ENCODE measurements at regions of chr11 and their contacts with region 1.

Region 1: GRCh38 chr11:93895106-93895862 is 44.9 kb upstream of the VSTM5 start:
- DNase-seq: peak; percentile 59
- ATAC-seq: peak; percentile 98
- H3K4me3 ChIP-seq: no peak overlapping the region
- H3K27ac ChIP-seq: no peak overlapping the region
- H3K4me1 ChIP-seq: no peaks in the 10 kb centered on the region
- H3K27me3 ChIP-seq: 0 out of 2 replicates have a peak, but pooled peaks cover 6% of the 10 kb centered on the region
- CTCF ChIP-seq: peak; percentile 59 to 79 (median 65); a peak in 5 of 6 replicates
- POLR2A ChIP-seq: no peak
- RAD21 ChIP-seq: peak; percentile 90

Region 2: DNA sequence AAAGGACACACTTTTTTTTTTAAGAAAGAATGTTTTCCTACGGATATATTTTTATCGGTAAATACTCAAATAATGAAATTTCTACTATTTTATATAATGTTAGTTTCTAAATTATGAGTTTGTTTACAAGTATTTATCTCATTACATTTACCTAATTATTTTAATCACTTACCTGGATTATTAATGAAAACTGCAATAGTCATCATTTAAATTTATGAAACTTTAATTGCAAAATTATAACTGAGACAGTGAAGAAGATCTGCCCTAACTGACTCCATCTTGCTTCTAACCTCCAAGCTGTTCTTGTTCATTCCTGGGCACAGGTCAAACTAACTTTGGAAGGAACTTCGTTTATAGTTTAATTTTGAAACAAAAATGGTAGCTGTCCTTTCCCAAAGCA is 19.6 kb before region 1 on chr11:
- CTCF ChIA-PET with region 1: interaction called, 12 read pairs
- POLR2A ChIA-PET with region 1: no interaction called
- RAD21 ChIA-PET with region 1: no interaction called
- intact Hi-C with region 1: no loop called
- DNase-seq: no peak
- ATAC-seq: no peak
- H3K4me3 ChIP-seq: no peak overlapping the region
- H3K27ac ChIP-seq: no peak overlapping the region
- H3K4me1 ChIP-seq: no peaks in the 10 kb centered on the region
- H3K27me3 ChIP-seq: no peaks in the 10 kb centered on the region
- CTCF ChIP-seq: no peak
- POLR2A ChIP-seq: no peak
- RAD21 ChIP-seq: no peak

Region 3: DNA sequence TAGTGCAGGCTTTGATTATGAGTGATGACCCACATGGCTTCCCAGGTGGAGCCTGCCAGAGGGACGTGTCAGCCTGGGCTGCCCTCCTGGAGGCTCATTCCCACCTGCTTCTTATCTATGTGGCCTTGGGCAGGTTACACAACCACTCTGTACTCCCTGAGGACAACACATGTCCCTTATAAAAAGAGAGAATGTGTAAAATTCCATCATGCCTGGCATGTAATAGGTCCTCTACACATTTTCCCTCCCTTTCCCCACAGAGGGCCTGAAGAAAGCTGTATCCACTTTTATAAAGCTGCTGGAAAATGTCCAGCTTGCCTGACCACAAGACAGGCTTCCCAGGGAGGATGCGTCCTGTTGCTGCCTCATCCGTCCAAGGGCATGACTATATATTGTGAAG is 10.1 kb after region 1 on chr11:
- CTCF ChIA-PET with region 1: interaction called, 10 read pairs
- POLR2A ChIA-PET with region 1: no interaction called
- RAD21 ChIA-PET with region 1: no interaction called
- intact Hi-C with region 1: no loop called
- DNase-seq: no peak
- ATAC-seq: no peak
- H3K4me3 ChIP-seq: no peak overlapping the region
- H3K27ac ChIP-seq: no peak overlapping the region
- H3K4me1 ChIP-seq: peaks cover 0 to 10% of the 10 kb centered on the region in 2 experiments; a peak in 2 of 4 replicates
- H3K27me3 ChIP-seq: peaks cover 4% of the 10 kb centered on the region; the same call in 1 of the 2 replicates
- CTCF ChIP-seq: no peak
- POLR2A ChIP-seq: no peak
- RAD21 ChIP-seq: no peak

Region 4: DNA sequence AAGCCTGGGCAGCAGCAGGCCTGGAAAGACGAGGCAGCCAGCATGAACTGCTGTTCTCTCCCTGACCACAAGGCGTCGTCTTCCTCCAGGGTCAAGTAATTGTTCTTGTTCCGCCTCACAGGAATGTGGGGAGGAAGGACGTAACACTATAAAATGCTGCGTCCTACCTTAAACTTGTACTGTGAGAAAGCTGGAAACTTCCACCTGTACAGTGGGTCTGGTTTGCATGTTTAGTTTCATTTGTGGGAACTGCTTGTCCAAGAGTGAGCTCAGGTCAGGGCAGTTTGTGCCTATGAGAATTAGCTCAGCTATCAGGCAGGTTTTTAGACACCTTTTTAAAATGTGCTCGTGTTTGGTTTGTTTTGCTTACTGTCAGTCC is 288.6 kb after region 1 on chr11:
- CTCF ChIA-PET with region 1: interaction called, 17 read pairs
- POLR2A ChIA-PET with region 1: no interaction called
- RAD21 ChIA-PET with region 1: interaction called in 1 of 2 experiments, 4 read pairs
- intact Hi-C with region 1: loop called (anchors 5 kb)
- DNase-seq: peak; percentile 49
- ATAC-seq: peak; percentile 94
- H3K4me3 ChIP-seq: no peak overlapping the region
- H3K27ac ChIP-seq: no peak overlapping the region
- H3K4me1 ChIP-seq: peaks cover 0 to 5% of the 10 kb centered on the region in 2 experiments; a peak in 1 of 4 replicates
- H3K27me3 ChIP-seq: no peaks in the 10 kb centered on the region
- CTCF ChIP-seq: peak; percentile 65 to 94 (median 90)
- POLR2A ChIP-seq: no peak
- RAD21 ChIP-seq: peak; percentile 82

Region 5: DNA sequence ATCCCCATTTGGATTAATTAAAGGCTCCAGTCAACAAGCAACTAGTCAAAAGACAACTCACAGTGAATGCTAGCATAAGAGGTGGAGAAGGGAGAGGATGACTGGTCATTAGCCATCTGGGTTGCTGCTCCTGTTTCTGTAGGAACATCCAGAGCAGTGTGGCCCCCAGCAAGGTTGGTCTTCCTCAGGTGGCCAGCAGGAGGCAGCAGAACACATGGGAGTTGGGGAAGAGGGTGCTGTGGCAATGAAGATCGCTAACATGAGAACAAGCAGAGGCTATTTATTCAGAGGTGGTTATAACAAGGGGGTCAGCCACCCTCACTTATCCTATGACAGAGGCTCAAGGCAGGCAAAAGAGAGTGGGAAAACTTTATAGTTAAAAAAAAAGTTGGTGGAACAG is 430.4 kb after region 1 on chr11:
- CTCF ChIA-PET with region 1: interaction called, 4 read pairs
- POLR2A ChIA-PET with region 1: no interaction called
- RAD21 ChIA-PET with region 1: no interaction called
- intact Hi-C with region 1: loop called (anchors 10 kb)
- DNase-seq: peak; percentile 41
- ATAC-seq: peak; percentile 94
- H3K4me3 ChIP-seq: no peak overlapping the region
- H3K27ac ChIP-seq: no peak overlapping the region
- H3K4me1 ChIP-seq: no peaks in the 10 kb centered on the region; a peak in 1 of 4 replicates
- H3K27me3 ChIP-seq: no peaks in the 10 kb centered on the region
- CTCF ChIP-seq: peak; percentile 45 to 83 (median 72); a peak in 5 of 6 replicates
- POLR2A ChIP-seq: no peak
- RAD21 ChIP-seq: peak; percentile 75

Region 6: DNA sequence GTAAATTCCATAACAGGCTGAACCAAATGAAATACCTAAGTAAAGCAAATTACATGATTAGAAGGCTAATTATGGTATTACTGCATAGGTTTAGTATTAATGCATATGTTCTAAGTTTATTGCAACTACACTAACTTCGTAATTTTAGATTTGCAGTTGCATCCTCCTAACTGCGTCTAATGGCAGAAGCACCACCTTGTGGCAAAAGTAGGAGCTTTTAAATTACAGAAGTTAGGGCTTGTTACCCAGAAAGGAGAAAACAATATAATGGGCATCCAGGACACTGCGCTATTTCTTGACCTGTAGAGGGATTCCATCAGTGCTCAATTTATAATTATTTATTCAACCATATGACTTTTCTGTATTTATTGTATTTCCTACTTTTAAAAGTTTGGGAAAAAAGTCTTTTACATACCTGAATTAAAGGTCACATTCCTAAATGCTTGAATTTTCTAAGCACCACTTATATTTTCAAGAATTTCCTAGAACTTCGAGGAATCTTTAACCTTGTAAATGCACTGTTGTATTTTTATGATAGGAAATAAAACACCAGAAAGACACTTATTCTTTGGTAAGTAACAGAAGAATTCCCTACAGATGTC is 522.2 kb after region 1 on chr11:
- CTCF ChIA-PET with region 1: interaction called, 19 read pairs
- POLR2A ChIA-PET with region 1: no interaction called
- RAD21 ChIA-PET with region 1: no interaction called
- intact Hi-C with region 1: loop called (anchors 2 kb)
- DNase-seq: peak; percentile 2
- ATAC-seq: peak; percentile 67
- H3K4me3 ChIP-seq: no peak overlapping the region
- H3K27ac ChIP-seq: no peak overlapping the region
- H3K4me1 ChIP-seq: no peaks in the 10 kb centered on the region
- H3K27me3 ChIP-seq: no peaks in the 10 kb centered on the region
- CTCF ChIP-seq: peak; percentile 39 to 55 (median 52); a peak in 5 of 6 replicates
- POLR2A ChIP-seq: no peak
- RAD21 ChIP-seq: peak; percentile 56